ENCODE measurements at regions of chr1 and their contacts with region 1.

Region 1: DNA sequence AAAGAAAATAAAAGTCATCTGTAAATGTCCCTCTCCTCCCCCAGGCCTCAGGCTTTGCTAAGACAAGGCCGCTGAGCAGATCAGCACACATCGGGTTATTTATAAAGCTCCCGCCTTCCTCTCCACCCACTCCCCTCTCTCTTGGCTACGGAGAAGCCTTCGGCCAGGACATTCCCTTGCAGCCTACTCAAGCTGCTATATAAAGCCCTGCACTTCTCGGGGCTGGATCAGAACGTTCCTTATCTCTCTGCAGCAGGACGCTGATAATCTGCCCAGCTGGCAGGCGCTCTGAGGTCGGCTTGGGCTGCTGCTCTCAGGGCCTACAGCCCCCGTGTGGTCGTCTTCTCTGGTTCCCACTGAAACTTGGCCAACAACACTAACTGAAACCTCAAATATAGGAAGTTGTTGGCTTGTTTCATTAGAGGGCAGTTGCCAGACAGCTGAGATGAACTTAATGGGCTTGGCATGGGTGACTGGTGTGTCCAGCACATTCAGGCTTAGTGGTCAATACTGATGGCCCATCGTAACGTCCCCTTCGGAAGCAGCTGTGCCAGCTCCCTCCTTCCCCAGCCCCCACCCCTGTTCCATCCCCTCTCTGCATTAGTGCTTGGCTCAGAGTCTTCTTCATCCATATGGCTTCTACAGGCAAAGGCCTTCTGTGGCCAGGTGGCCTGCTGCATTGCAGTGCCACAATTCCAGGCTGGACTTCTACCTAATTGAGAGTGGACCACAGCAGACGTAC is 64.6 kb downstream of the IER5 start:
- DNase-seq: peak; percentile 86 to 92
- ATAC-seq: peak; percentile 92 to 97 (median 96)
- H3K4me3 ChIP-seq: peak overlapping the region in 1 of 10 donors; percentile 9
- H3K27ac ChIP-seq: peak overlapping the region; percentile 75 to 97 (median 92)
- H3K4me1 ChIP-seq: peaks cover 11 to 62% (median 40%) of the 10 kb centered on the region in 9 donors
- H3K27me3 ChIP-seq: no peaks in the 10 kb centered on the region
- CTCF ChIP-seq: peak in 8 of 9 donors; percentile 36 to 65 (median 48)

Region 2: GRCh38 chr1:180521474-180522207 is 631.4 kb before region 1 on chr1:
- intact Hi-C with region 1: loop called in 4 of 10 experiments (anchors 2 to 10 kb)
- DNase-seq: no peak
- ATAC-seq: no peak
- H3K4me3 ChIP-seq: no peak overlapping the region
- H3K27ac ChIP-seq: peak overlapping the region in 2 of 10 donors; percentile 23 to 52
- H3K4me1 ChIP-seq: peaks cover 0 to 51% (median 20%) of the 10 kb centered on the region in 9 donors
- H3K27me3 ChIP-seq: no peaks in the 10 kb centered on the region
- CTCF ChIP-seq: no peak

Region 3: DNA sequence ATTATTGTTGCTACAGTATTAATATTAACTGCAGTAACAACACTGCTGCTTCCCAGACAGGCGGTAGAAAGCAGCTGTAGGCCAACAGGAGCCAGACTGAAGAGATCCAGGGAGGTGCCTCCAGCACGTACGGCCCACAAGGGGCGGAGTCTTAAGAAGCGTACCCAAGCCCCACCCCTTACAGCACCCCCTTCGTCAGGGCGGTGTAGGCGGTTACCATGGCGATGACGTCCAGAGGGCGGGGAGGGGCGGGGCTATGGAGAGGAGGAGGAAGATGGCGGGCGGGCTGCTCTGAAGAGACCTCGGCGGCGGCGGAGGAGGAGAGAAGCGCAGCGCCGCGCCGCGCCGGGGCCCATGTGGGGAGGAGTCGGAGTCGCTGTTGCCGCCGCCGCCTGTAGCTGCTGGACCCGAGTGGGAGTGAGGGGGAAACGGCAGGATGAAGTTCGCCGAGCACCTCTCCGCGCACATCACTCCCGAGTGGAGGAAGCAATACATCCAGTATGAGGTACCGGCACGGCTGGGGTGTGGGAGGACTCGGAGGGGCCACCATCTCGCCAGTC is 521.2 kb before region 1 on chr1 and contains the start of gene XPR1:
- intact Hi-C with region 1: loop called in 1 of 10 experiments (anchors 10 kb)
- DNase-seq: peak; percentile 99
- ATAC-seq: peak; percentile 98 to 99 (median 99)
- H3K4me3 ChIP-seq: peak within 1 kb of the TSS; percentile 75 to 94 (median 86)
- H3K27ac ChIP-seq: peak within 1 kb of the TSS; percentile 90 to 98 (median 94)
- H3K4me1 ChIP-seq: peaks cover 0 to 51% (median 27%) of the 10 kb centered on the region in 9 donors
- H3K27me3 ChIP-seq: no peaks in the 10 kb centered on the region
- CTCF ChIP-seq: peak; percentile 13 to 55 (median 32)
- total RNA-seq, gene XPR1: 28.2 to 142 (median 78.7) TPM